ENCODE measurements at regions of chr19 and their contacts with region 1.

Region 1: GRCh38 chr19:2327773-2328400 is 499 bp downstream of the LSM7 start:
- DNase-seq: peak; percentile 29
- H3K4me3 ChIP-seq: peak overlapping the region; percentile 86
- H3K27ac ChIP-seq: peak overlapping the region; percentile 47
- H3K27me3 ChIP-seq: no peaks in the 10 kb centered on the region
- CTCF ChIP-seq: no peak

Region 2: GRCh38 chr19:2289714-2290435 is 38.0 kb before region 1 on chr19:
- CTCF ChIA-PET with region 1: no interaction called
- POLR2A ChIA-PET with region 1: interaction called, 14 read pairs
- DNase-seq: no peak
- H3K4me3 ChIP-seq: peak overlapping the region; percentile 10; the same call in 1 of the 2 replicates
- H3K27ac ChIP-seq: no peak overlapping the region
- H3K27me3 ChIP-seq: peaks cover 57% of the 10 kb centered on the region
- CTCF ChIP-seq: no peak

Region 3: GRCh38 chr19:2361246-2362045 is 33.6 kb after region 1 on chr19:
- CTCF ChIA-PET with region 1: no interaction called
- POLR2A ChIA-PET with region 1: no interaction called
- DNase-seq: no peak
- H3K4me3 ChIP-seq: no peak overlapping the region
- H3K27ac ChIP-seq: no peak overlapping the region
- H3K27me3 ChIP-seq: peaks cover 24% of the 10 kb centered on the region
- CTCF ChIP-seq: no peak

Measured in AG04450 (cell line).